Right cardiac atrium (tissue), 5 donors: ENCODE measurements at regions of chr22 and their contacts with region 1.

Region 1: DNA sequence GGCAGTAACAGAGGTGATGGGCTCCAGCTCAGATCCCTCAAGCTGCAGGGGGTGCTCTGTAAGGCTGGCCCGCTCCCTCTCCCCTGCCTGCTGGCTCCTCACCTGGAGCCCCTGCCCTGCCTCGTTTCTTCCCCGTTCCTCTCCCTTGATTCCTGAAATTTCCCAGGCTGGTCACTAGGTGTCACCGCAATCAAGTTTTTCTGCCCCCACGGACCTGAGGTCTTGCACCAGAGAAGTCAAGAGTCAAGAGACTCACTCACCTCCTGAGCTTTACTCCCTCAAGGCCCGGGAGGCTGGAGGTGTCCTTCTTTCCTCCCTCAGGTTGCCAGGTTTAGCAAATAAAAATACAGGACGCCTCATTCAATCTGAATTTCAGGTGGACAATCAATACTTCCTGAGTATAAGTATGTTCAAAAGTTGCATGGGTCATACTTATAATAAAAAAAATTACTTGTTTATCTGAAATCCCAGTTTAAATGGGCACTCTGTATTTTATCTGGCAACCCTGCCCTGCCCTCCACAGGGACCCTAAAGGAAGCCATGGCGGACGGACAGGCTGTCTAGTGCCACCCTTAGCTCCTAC is 69.2 kb downstream of the SCUBE1 start:
- DNase-seq: no peak
- ATAC-seq: peak; percentile 37 to 54
- H3K4me3 ChIP-seq: no peak overlapping the region
- H3K27ac ChIP-seq: no peak overlapping the region
- H3K4me1 ChIP-seq: no peaks in the 10 kb centered on the region
- H3K27me3 ChIP-seq: no peaks in the 10 kb centered on the region

Region 2: DNA sequence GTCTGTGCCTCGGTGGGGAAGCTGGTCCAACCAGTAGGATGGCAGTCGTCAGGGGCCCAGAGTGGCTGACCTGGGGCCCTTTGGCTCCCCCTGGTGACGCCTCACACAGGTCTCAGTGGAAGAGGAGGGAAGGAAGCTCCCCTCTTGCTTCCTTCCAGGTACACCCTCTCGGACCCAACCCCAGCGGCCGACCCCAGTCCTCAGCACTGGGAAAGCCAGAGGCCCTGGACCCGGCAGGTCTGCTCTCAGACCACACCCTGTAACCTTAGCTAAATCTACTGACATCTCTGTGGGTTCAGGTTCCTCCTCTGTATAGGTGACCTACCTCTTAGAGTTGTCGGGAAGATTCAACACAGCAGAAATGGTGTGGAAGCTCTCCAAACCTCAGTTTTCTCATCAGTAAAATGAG is 72.5 kb after region 1 on chr22:
- intact Hi-C with region 1: loop called (anchors 2 to 10 kb)
- DNase-seq: peak; percentile 55 to 84 (median 80)
- ATAC-seq: peak; percentile 41 to 60
- H3K4me3 ChIP-seq: no peak overlapping the region
- H3K27ac ChIP-seq: no peak overlapping the region
- H3K4me1 ChIP-seq: no peaks in the 10 kb centered on the region
- H3K27me3 ChIP-seq: no peaks in the 10 kb centered on the region